ENCODE measurements at regions of chr14 and their contacts with region 1.

Region 1: DNA sequence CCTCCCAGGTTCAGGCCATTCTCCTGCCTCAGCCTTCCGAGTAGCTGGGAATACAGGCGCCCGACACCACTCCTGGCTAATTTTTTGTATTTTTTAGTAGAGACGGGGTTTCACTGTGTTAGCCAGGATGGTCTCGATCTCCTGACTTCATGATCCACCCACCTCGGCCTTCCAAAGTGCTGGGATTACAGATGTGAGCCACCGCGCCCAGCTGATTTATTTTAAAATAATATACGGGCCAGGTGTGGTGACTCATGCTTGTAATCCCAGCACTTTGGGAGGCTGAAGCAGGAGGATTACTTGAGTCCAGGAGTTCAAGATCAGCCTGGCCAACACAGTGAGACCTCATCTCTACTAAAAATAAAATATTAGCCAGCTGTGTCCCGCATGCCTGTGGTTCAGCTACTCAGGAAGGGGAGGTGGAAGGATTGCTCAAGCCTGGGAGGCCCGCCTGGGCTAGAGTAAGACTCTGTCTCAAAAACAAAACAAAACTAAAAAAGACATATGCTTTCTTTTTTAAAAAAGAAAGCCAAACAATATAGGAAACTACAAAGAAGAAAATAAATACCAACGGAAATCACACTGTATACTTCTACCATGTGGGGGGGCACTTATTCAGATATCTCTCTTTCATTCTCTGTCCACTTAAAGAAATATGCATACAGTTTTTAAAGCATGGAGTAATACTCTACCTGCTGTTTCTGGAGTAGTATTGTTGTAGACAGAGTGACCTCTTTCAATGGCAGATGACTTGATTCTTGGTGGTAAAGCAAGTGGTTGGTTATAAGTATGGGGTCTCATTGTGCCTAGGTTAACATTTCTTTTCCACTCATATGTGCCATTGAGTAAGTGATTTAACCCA is 930 bp upstream of the MIA2 start:
- DNase-seq: peak; percentile 43
- H3K4me3 ChIP-seq: no peak overlapping the region
- H3K27ac ChIP-seq: peak overlapping the region; percentile 15
- H3K4me1 ChIP-seq: peaks cover 9% of the 10 kb centered on the region
- H3K27me3 ChIP-seq: peaks cover 1% of the 10 kb centered on the region
- CTCF ChIP-seq: peak in 1 of 2 donors; percentile 8

Region 2: DNA sequence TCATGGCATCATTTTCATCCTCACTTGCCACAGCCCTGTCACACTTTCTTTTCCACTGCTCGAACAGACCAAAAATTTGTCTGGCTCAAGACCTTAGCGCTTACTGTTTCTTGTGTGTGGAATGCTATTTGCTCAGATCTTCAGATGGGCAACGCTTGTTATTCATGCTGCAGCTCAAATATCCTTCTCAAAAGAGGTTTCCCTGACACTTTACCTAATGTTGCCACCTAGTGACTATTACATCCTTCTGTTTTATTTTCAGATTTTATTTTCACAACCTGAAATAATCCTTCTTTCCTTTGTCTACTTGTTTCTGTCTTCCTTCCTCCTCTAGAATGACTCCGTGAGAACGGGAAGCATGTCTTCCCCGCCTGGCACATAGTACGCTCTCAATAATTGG is 193.8 kb after region 1 on chr14:
- CTCF ChIA-PET with region 1: no interaction called
- dilution Hi-C with region 1: no loop called
- in situ Hi-C with region 1: no loop called
- intact Hi-C with region 1: loop called (anchors 5 kb)
- DNase-seq: peak; percentile 31
- H3K4me3 ChIP-seq: no peak overlapping the region
- H3K27ac ChIP-seq: no peak overlapping the region
- H3K4me1 ChIP-seq: peaks cover 16% of the 10 kb centered on the region
- H3K27me3 ChIP-seq: no peaks in the 10 kb centered on the region
- CTCF ChIP-seq: peak in 1 of 2 donors; percentile 35

Measured in mammary epithelial cell (primary cell).